Activated CD4-positive, alpha-beta T cell treated with anti-CD3 and anti-CD28 coated beads, Interleukin-2, amount 10 ng/mL, durations not matched to agents 7 days and 5 days (primary cell): ENCODE measurements at regions of chr19 and their contacts with region 1.

Region 1: GRCh38 chr19:45692187-45693105 is at the start of gene QPCTL:
- DNase-seq: peak; percentile 99
- H3K4me3 Mint-ChIP-seq: peak within 1 kb of the TSS; percentile 92
- H3K27ac Mint-ChIP-seq: peak within 1 kb of the TSS; percentile 91
- H3K4me1 Mint-ChIP-seq: peaks cover 18% of the 10 kb centered on the region
- H3K27me3 Mint-ChIP-seq: no peaks in the 10 kb centered on the region
- total RNA-seq, gene QPCTL: 6.1 to 7.3 TPM

Region 2: DNA sequence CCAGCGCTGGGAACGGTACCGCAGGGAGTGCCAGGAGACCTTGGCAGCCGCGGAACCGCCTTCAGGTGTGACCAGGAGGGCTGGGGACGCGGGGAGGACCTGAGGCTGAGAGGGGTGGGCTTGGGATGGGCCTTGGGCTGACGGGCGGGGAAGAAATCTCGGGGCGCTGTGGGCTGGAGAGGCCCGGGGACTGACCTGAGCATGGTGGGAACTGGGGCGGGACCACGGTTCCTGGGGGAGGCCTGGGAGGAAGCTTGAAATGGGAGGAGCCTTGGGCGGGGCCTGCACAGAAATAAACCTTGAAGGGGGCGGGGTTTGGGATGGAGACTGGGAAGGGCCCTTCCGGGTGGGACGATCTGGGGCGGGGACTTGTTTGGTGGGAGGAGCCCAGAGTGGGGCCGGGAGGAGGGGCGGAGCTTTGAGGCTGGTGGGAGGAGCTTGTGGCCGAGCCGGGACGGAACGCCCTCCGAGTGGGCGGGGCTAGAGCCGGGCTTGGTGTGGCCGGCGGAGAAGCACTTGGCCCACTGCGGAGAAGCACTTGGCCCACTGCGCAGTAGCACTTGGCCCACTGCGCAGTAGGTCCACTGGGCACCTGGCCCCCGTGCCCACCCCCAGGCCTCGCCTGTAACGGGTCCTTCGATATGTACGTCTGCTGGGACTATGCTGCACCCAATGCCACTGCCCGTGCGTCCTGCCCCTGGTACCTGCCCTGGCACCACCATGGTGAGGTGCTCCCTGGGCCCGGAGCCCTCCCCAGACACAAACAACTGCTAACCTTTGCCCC is 21.6 kb before region 1 on chr19:
- CTCF ChIA-PET with region 1: interaction called, 80 read pairs
- POLR2A ChIA-PET with region 1: no interaction called
- DNase-seq: peak; percentile 63
- H3K4me3 Mint-ChIP-seq: no peak overlapping the region
- H3K27ac Mint-ChIP-seq: no peak overlapping the region
- H3K4me1 Mint-ChIP-seq: peaks cover 34% of the 10 kb centered on the region
- H3K27me3 Mint-ChIP-seq: peaks cover 26% of the 10 kb centered on the region

Region 3: DNA sequence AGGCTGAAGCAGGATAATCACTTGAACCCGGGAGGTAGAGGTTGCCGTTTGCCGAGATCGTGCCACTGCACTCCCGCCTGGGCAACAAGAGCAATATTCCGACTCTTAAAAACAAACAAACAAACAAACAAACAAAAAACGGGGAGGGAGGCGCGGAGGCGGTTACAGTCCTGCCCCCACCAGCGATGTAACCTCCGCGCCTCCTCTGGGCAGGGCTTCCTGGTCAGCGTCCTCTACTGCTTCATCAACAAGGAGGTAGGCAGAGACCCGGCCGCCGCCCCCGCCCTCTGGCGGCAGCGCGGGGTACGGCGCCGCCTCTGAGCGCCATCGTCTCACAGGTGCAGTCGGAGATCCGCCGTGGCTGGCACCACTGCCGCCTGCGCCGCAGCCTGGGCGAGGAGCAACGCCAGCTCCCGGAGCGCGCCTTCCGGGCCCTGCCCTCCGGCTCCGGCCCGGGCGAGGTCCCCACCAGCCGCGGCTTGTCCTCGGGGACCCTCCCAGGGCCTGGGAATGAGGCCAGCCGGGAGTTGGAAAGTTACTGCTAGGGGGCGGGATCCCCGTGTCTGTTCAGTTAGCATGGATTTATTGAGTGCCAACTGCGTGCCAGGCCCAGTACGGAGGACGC is 10.9 kb before region 1 on chr19:
- CTCF ChIA-PET with region 1: interaction called, 80 read pairs
- POLR2A ChIA-PET with region 1: interaction called, 5 read pairs
- DNase-seq: peak; percentile 88
- H3K4me3 Mint-ChIP-seq: peak overlapping the region; percentile 76
- H3K27ac Mint-ChIP-seq: peak overlapping the region; percentile 90
- H3K4me1 Mint-ChIP-seq: peaks cover 22% of the 10 kb centered on the region
- H3K27me3 Mint-ChIP-seq: peaks cover 7% of the 10 kb centered on the region

Region 4: DNA sequence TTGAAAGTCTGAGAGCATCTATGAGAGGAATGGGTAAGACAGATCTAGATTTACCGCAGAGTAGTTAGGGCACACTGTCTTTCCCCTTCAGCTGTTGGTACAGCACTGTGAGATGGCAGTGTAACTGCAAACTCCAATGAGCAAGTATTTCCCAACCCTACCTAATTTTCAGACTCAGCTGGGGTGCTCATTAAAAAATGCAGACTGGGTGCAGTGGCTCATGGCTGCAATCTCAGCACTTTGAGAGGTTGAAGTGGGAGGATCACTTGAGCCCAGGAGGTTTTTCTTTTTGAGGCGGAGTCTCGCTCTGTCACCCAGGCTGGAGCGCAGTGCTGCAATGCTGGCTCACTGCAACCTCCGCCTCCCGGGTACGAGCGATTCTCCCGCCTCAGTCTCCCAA is 12.7 kb after region 1 on chr19:
- CTCF ChIA-PET with region 1: interaction called, 17 read pairs
- POLR2A ChIA-PET with region 1: no interaction called
- DNase-seq: no peak
- H3K4me3 Mint-ChIP-seq: no peak overlapping the region
- H3K27ac Mint-ChIP-seq: no peak overlapping the region
- H3K4me1 Mint-ChIP-seq: peaks cover 12% of the 10 kb centered on the region
- H3K27me3 Mint-ChIP-seq: no peaks in the 10 kb centered on the region

Region 5: DNA sequence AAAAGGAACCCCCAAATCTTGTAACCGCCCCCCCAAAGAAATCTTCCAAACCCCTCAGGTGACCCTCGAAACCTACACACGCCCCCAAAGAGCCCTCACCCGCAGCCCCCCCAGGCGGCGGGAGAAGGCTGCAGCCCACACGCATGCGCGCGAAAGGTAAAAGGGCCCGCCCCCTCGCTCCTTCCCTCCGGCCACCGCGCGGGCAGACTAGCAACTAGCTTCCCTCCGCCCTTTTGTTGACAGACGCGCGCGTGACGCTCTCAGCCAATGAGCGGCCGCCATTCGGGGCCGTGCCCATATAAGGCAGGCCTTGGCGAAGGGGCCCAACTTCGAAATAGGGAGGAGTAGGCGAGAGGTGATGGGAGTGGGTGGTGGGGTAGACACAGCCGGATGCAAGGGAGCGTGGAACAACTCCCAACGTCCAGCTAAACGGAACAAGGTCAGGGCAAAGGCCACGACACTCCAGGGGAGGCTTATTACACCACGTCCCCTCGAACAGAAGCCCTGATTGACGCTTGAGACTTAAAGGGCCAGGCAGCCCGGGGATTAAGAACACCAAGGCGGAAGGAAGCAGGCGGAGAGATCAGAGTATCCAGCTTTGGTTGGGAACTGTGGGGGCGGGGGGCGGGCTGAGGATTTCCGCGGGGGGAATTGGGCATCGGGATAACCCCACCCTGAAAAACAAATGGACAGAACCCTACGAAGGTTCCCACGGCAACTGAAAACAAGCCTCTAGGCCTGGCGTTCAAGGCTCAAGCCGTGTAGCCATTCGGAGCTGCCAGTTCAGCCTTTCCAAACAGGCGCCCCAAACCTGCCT is 24.9 kb after region 1 on chr19:
- CTCF ChIA-PET with region 1: interaction called, 31 read pairs
- POLR2A ChIA-PET with region 1: interaction called, 3 read pairs
- DNase-seq: peak; percentile 99
- H3K4me3 Mint-ChIP-seq: peak overlapping the region; percentile 92
- H3K27ac Mint-ChIP-seq: peak overlapping the region; percentile 92
- H3K4me1 Mint-ChIP-seq: peaks cover 42% of the 10 kb centered on the region
- H3K27me3 Mint-ChIP-seq: no peaks in the 10 kb centered on the region